ENCODE measurements at regions of chr1 and their contacts with region 1.

Region 1: GRCh38 chr1:160607011-160607671 is 27.8 kb upstream of the CD84 start:
- DNase-seq: peak; percentile 62
- H3K4me3 Mint-ChIP-seq: peak overlapping the region; percentile 55
- H3K27ac Mint-ChIP-seq: peak overlapping the region; percentile 60
- H3K4me1 Mint-ChIP-seq: peaks cover 51% of the 10 kb centered on the region
- H3K27me3 Mint-ChIP-seq: no peaks in the 10 kb centered on the region

Region 2: GRCh38 chr1:160342953-160343869 is 263.9 kb before region 1 on chr1 and contains the starts of genes COPA and NCSTN:
- intact Hi-C with region 1: loop called (anchors 5 kb)
- DNase-seq: peak; percentile 87
- H3K4me3 Mint-ChIP-seq: peak within 1 kb of the TSS; percentile 99
- H3K27ac Mint-ChIP-seq: peak within 1 kb of the TSS; percentile 99
- H3K4me1 Mint-ChIP-seq: peaks cover 44% of the 10 kb centered on the region
- H3K27me3 Mint-ChIP-seq: no peaks in the 10 kb centered on the region
- total RNA-seq, gene COPA: 153 and 154 TPM in 2 replicates
- total RNA-seq, gene NCSTN: 65.3 and 72.4 TPM in 2 replicates

Region 3: DNA sequence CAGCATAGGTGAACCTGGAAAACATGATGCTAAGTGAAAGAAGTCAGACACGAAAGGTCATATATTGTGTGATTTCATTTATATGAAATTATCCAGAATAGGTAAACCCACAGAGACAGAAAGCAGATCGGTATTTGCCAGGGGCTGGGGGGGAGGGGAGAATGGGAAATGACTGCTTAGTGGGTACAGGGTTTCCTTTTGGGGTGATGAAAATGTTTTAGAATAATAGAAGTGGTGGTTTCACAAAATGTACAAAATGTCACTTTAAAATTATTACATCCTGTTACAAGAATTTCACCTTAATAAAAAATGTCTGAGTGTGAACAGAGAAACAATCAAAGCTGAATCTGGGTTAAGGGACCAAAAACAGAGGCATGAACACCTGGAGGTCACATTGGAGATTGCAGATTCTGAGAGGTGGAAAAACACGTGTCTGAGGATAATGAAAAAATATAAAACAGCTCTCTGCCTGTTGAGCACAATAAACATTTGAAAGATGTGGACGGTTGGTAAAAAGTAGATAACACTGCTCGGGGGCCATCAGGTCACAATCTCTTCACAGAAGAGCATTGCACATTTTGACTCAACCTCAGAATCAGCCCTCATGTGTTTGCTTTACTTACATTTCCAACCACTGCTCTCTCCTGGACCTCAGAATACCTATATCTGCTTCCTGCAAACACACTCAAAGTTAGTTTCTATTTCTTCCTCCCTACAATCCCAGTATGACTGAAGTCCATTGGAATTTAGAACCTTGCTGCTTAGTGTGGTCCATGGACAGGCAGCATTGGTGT is 87.3 kb before region 1 on chr1:
- intact Hi-C with region 1: loop called (anchors 1 kb)
- DNase-seq: peak; percentile 31
- H3K4me3 Mint-ChIP-seq: peak overlapping the region; percentile 85
- H3K27ac Mint-ChIP-seq: peak overlapping the region; percentile 97
- H3K4me1 Mint-ChIP-seq: peaks cover 69% of the 10 kb centered on the region
- H3K27me3 Mint-ChIP-seq: no peaks in the 10 kb centered on the region

Region 4: DNA sequence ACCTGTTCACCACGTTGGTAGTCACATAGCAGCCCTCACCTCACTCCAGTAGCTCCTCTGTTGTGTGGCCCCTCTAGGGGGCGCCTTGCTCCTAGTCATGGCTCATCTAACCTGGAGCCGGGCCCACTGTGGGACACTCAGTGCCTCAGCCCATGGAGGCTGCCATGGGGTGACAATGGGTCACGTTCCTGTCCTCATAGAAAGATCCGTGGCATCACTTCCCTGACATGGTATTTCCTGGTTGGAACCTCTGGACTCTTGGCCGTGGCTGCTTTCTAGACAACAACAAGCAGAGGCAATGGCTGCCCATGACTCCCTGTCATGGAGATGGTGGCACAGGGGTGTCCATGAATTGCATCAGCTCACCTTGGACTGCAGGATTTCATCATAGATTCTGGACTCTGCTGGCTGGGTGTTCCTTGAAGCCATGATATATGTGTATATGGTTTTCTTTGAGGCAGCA is 56.5 kb before region 1 on chr1:
- intact Hi-C with region 1: loop called (anchors 1 kb)
- DNase-seq: peak; percentile 37
- H3K4me3 Mint-ChIP-seq: no peak overlapping the region
- H3K27ac Mint-ChIP-seq: no peak overlapping the region
- H3K4me1 Mint-ChIP-seq: peaks cover 11% of the 10 kb centered on the region
- H3K27me3 Mint-ChIP-seq: no peaks in the 10 kb centered on the region

Region 5: DNA sequence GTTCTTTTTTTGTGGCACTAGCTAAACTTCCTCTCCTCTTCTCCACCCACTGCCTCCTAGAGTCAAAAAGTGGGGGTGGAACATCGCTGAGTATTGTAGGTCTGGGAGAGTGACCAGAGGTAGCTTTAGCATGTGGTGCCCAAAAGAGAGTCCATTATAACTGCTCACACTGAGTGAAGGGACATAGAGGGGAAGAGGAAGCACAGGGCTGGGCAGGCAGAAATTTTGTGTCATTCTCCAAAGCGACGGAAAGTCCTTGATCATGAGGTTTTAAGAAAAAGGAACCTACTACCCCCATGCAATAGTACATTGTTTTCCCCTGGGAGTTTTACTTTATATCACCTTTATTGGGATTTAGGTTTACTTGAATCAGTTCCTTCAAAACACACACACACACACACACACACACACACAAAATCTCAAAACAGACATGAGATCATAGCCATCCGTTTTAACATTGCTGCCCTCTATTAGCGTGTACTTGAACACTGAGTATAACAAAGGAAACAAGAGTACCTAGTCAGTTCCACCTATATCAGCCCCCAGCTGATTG is 32.0 kb before region 1 on chr1:
- intact Hi-C with region 1: loop called (anchors 1 kb)
- DNase-seq: no peak
- H3K4me3 Mint-ChIP-seq: peak overlapping the region; percentile 51
- H3K27ac Mint-ChIP-seq: peak overlapping the region; percentile 93
- H3K4me1 Mint-ChIP-seq: peaks cover 87% of the 10 kb centered on the region
- H3K27me3 Mint-ChIP-seq: no peaks in the 10 kb centered on the region

Region 6: GRCh38 chr1:160623227-160623633 is 16.1 kb after region 1 on chr1:
- intact Hi-C with region 1: loop called (anchors 2 kb)
- DNase-seq: no peak
- H3K4me3 Mint-ChIP-seq: peak overlapping the region; percentile 68
- H3K27ac Mint-ChIP-seq: peak overlapping the region; percentile 100
- H3K4me1 Mint-ChIP-seq: peaks cover 87% of the 10 kb centered on the region
- H3K27me3 Mint-ChIP-seq: no peaks in the 10 kb centered on the region